AG04449 (cell line): ENCODE measurements at regions of chr2 and their contacts with region 1.

Region 1: DNA sequence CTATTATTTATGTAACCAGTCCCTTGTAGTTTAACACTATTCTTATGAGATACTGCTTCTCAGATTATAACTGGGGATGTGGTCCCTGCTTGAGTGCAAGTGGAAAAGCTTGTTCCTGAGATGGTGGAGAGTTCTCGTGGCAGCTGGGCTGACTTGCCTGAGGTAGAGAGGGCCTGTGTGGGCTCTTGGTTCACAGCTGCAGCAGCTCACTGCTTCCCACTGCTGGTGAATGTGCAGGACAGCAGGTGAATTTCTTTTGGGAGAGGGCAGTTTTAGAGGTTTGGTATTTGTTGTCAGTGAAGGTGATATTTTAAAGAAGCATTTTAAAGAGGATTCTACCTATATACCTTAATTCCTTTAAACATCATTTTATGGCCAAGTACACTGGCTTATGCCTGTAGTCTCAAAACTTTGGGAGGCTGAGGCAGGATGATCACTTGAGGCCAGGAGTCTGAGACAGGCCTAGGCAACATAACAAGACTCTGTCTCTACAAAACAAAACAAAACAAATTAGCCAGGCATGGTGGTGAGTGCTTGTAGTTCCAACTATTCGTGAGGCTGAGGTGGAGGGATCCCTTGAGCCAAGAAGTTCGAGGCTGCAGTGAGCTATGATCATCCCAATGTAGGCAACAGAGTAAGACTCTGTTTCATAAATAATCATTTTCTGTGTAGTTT is 94.8 kb downstream of the MTA3 start:
- DNase-seq: peak; percentile 23
- H3K4me3 ChIP-seq: no peak overlapping the region
- CTCF ChIP-seq: peak; percentile 94

Region 2: GRCh38 chr2:42494355-42495233 is 168.6 kb before region 1 on chr2:
- CTCF ChIA-PET with region 1: interaction called, 71 read pairs
- POLR2A ChIA-PET with region 1: no interaction called
- DNase-seq: peak; percentile 14
- H3K4me3 ChIP-seq: peak overlapping the region; percentile 50
- CTCF ChIP-seq: peak; percentile 73

Region 3: DNA sequence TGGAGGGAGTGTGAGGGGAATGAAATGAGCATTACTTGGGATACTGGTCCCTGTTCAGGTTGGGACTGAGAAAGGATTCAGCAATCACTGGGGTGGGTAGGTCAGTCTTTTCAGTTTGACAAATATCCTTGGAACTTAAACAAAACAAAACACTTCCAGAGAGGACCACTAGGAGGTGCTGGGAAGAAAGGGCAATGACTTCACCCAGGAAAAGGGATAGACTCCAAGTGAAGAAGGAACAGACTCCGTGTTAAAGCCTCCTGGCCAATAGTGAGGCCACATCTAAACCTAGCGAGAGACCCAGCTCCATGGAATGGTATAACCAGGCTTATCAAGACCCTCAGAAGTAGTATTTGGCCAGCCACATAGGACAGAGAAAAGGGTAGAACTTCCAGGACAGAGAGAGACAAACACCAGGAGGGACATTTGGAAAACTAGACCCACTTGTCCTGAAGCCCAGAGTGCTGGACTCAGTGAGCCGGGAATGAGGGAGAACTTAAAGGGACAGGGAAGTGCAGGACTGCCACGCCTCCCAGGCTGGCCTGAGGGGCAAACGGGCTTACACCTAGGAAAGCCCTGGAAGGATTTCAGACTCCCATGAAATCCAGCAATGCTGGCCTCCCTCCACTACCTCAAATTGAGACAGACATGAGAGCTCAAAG is 149.9 kb before region 1 on chr2:
- CTCF ChIA-PET with region 1: interaction called, 35 read pairs
- POLR2A ChIA-PET with region 1: no interaction called
- DNase-seq: peak; percentile 4
- H3K4me3 ChIP-seq: no peak overlapping the region
- CTCF ChIP-seq: peak; percentile 63

Region 4: DNA sequence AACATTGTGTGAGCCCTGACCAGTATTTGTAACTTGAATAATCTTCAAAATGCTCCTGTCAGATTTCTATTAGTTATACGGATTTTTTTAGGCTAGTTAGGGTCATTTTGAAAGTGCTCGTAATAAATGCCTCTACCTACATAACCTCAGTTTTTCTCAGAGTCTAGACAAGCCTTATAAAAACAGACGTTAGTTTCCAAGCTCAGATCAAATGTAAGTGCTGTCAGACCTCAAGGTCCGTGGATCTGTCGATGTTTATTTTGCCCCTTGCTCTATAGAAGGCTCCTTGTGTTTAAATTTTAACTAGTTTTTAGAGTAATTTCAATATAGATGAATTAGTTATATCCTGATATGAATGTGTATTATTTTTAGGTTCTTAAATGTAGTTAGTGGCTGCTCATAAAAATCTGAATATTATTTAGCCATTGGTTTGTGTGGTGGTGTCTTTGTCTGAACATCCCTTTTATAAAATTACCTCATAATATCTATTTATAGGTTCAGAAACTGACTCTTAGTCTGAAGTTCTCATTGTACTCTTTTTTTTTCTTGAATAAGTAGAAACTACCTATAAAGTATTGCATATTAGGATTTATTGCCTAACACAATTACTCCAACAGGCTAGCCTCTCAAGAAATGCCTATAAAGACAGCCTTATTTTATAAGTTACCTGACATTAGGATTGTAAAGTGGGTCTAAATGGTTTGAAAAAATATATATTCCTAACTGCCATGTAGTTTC is 23.7 kb before region 1 on chr2:
- CTCF ChIA-PET with region 1: interaction called, 16 read pairs
- POLR2A ChIA-PET with region 1: no interaction called
- DNase-seq: no peak
- H3K4me3 ChIP-seq: no peak overlapping the region
- CTCF ChIP-seq: no peak

Region 5: DNA sequence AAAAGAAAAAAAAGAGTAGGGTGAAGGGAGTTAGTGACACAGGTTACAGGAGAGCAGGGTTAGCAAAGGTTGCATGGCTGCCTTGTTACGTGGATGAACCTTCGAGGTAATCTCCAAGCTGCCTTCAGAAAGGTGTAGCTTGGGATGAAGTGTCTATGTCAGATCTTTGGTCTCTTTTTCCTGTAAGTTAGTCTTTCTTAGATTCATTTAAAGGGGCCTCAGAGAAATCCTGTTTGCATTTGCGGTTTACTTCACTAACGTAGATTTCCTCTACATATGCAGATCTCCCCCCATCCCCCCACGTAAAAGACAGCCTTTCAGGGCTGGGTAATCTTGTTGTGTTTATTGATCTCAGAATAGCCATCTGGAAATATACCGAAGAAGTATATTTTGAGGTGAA is 11.2 kb before region 1 on chr2:
- CTCF ChIA-PET with region 1: interaction called, 68 read pairs
- POLR2A ChIA-PET with region 1: no interaction called
- DNase-seq: no peak
- H3K4me3 ChIP-seq: no peak overlapping the region
- CTCF ChIP-seq: no peak

Region 6: DNA sequence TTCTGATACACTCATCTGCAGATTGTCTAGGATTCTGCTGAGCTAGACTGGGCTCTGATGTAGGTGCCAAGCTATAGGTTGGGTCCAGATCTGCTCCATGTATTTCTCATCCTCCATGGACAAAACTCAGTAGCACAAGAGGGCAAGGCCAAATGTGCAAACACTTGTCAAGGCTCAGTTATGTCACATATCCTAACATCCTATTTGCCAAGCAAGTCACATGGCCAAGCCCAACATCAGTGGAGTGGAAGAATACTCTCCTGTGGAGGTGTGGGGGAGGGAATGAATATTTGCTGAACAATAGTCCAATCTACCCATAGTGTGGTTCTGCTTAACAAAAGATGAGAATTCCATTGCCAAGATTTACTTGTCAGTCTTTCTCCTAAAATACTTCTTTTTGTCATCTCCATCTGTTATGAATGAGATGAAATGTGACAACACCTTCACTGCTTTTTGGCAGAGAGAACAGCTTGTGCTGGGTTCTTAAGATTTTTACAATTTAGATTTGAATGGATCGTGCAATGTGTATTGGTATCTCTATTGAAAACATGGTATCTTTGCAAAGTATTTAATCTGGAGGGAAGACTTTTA is 10.8 kb after region 1 on chr2:
- CTCF ChIA-PET with region 1: interaction called, 24 read pairs
- POLR2A ChIA-PET with region 1: no interaction called
- DNase-seq: no peak
- H3K4me3 ChIP-seq: no peak overlapping the region
- CTCF ChIP-seq: no peak

Region 7: DNA sequence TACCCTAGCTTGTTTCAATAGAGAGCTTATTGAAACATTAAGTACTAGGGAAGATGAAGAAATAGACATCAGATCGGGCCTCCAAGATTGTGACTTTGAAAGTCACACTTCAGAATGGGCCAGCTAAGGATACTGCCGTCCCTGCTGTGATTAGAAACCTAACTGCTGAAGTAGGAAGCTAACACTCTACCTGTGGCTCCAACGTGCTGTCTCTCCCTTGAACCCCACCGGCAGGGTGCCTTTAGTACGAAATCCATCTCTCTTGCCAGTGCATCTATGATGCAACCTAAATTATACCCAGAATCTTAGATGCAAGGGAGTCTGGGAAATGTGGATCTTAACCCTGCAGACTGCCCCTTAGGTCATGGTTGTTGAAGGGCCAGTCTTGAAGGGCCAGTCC is 22.1 kb after region 1 on chr2:
- CTCF ChIA-PET with region 1: interaction called, 36 read pairs
- POLR2A ChIA-PET with region 1: no interaction called
- DNase-seq: no peak
- H3K4me3 ChIP-seq: no peak overlapping the region
- CTCF ChIP-seq: no peak

Region 8: GRCh38 chr2:42736598-42737322 is 73.5 kb after region 1 on chr2:
- CTCF ChIA-PET with region 1: no interaction called
- POLR2A ChIA-PET with region 1: no interaction called
- DNase-seq: no peak
- H3K4me3 ChIP-seq: no peak overlapping the region
- CTCF ChIP-seq: no peak

Region 9: GRCh38 chr2:42827647-42828486 is 164.6 kb after region 1 on chr2:
- CTCF ChIA-PET with region 1: no interaction called
- POLR2A ChIA-PET with region 1: no interaction called
- DNase-seq: no peak
- H3K4me3 ChIP-seq: peak overlapping the region; percentile 42
- CTCF ChIP-seq: peak; percentile 97